G401 (cell line): ENCODE measurements at regions of chr7 and their contacts with region 1.

Region 1: GRCh38 chr7:30184791-30185487 is 50.2 kb downstream of the MTURN start:
- DNase-seq: no peak

Region 2: DNA sequence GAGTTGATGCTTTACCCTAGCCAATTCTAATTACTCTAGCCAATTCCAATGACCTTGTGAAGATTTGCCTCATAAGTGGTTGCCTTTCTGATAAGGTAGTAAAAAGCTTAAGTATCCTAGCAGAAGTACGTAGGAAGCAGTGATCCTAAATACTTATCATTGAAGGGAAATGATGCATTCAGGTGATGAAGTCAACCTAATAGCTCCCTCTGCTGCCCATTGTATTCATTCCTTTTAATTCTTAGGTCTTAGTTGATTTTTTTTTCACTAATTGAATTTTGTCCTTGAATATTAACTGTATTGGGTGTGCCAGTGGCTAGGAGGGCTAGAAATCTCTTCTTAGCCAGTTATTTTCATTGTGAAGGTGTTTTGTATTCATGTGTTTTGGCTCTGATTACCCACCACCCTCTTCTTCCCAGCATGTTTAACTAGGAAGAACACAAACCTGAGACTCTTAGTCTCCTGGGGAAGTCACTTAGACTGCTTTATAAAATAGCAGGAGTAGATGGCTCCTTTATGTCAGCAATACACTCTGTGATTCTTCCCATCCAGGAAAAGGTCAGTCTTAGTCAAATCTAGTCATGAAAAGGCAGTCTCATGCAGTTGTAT is 110.4 kb before region 1 on chr7:
- in situ Hi-C with region 1: no loop called
- DNase-seq: peak; percentile 75

Region 3: DNA sequence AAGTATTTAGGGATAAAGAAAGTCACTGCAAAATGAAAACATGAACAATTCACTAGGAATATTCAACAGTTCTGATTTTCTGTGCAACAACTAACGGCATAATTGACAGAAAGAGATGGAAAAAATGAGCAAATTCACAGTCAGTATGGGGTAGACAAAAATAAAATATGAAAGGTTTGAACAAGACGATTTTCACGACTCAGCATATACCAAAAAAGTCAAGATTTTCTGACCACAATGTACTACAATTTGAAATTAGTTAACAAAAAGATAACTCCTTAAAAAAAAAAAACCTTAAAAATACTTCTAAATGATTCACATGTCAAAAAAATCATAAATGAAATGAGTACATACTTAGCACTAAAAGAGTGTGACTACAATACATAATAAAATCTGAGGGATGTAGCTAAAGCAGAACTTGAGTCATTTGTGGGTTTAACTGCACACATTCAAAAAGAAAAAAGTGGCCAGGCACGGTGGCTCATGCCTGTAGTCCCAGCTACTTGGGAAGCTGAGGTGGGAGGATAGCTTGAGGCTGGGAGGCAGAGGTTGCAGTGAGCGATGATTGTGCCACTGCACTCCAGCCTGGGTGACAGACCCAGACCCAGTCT is 72.7 kb before region 1 on chr7:
- in situ Hi-C with region 1: no loop called
- DNase-seq: no peak

Region 4: DNA sequence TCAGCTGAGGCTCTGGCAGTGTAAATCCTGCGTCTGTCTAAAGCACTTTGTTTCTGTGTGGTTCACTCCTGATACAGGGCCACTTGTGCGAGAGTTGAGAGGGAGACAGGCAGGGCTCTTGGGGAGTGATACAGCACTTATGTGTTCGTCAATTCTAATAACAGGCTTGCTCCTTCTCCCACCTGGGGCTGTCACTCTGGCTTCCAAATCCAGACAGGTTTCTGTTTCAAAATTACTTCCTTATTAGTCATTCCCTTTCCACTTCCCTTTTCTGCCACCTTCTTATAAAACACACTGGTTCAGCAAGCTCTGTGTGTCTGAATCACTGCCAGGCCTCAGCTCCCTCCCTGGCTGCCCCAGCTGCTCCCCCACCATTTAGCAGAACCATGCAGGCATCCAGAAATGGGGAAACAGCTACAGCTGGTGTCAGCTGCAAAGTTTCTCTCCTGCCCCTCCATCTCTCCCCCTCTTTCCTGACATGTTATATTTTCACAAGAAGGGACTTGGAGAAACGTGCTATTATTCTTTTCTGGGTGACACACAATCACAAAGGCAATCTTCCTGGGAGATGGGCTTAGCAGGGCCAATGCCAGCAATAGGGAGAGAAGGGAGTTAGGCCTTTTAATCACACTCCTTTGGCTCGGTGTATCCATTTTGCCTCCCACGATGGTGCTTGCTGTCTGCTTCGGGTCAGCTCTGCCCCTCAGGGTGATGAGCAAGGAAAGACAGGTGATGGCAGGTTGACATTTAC is 41.1 kb after region 1 on chr7:
- in situ Hi-C with region 1: loop called (anchors 5 kb)
- DNase-seq: peak; percentile 84